Activated CD4-positive, alpha-beta T cell treated with anti-CD3 and anti-CD28 coated beads for 36 hours (primary cell): ENCODE measurements at regions of chr4 and their contacts with region 1.

Region 1: GRCh38 chr4:86934771-86935565 is at the start of gene AFF1:
- DNase-seq: peak; percentile 94
- ATAC-seq: peak; percentile 68
- H3K4me3 Mint-ChIP-seq: peak within 1 kb of the TSS; percentile 84
- H3K27ac Mint-ChIP-seq: peak within 1 kb of the TSS; percentile 97
- H3K4me1 Mint-ChIP-seq: peaks cover 40% of the 10 kb centered on the region
- H3K27me3 Mint-ChIP-seq: no peaks in the 10 kb centered on the region
- total RNA-seq, gene AFF1: 47.3 to 57.8 TPM

Region 2: DNA sequence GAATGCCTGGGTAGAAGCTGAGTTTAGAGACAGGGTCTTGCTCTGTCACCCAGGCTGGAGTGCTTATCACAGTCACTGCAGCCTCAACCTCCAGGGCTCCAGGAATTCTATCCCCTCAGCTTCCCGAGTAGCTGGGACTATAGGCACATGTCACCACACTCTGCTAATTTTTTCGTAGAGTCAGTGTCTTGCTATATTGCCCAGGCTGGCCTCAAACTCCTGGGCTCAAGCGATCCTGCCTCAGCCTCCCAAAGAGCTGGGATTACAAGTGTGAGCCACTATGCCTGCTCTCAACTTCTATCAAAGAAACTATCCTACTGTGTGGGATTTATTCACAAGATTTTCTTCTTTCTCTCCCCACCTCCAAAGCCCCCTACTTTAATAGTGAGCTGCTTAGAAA is 590.8 kb before region 1 on chr4:
- CTCF ChIA-PET with region 1: no interaction called
- POLR2A ChIA-PET with region 1: no interaction called
- intact Hi-C with region 1: no loop called
- DNase-seq: no peak
- ATAC-seq: no peak
- H3K4me3 Mint-ChIP-seq: no peak overlapping the region
- H3K27ac Mint-ChIP-seq: no peak overlapping the region
- H3K4me1 Mint-ChIP-seq: no peaks in the 10 kb centered on the region
- H3K27me3 Mint-ChIP-seq: peaks cover 2% of the 10 kb centered on the region

Region 3: DNA sequence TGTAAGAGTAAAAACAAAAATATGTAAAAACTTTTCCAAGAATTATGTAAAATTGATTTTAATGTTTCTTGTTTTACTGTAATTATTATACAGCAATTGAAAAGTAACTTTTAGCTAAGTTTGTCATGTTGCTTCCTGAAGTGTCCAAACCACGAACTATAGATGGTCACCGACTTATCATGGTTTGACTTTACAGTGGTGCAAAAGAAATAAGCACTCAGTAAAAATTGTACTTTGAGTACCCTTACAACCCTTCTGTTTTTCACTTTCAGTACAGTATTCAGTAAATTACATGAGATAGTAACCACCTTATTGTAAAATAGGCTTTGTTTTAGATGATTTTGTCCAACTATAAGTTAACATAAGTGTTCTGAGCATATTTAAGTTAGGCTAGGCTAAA is 179.6 kb before region 1 on chr4:
- CTCF ChIA-PET with region 1: no interaction called
- POLR2A ChIA-PET with region 1: no interaction called
- intact Hi-C with region 1: no loop called
- DNase-seq: no peak
- ATAC-seq: no peak
- H3K4me3 Mint-ChIP-seq: no peak overlapping the region
- H3K27ac Mint-ChIP-seq: no peak overlapping the region
- H3K4me1 Mint-ChIP-seq: no peaks in the 10 kb centered on the region
- H3K27me3 Mint-ChIP-seq: peaks cover 1% of the 10 kb centered on the region

Region 4: DNA sequence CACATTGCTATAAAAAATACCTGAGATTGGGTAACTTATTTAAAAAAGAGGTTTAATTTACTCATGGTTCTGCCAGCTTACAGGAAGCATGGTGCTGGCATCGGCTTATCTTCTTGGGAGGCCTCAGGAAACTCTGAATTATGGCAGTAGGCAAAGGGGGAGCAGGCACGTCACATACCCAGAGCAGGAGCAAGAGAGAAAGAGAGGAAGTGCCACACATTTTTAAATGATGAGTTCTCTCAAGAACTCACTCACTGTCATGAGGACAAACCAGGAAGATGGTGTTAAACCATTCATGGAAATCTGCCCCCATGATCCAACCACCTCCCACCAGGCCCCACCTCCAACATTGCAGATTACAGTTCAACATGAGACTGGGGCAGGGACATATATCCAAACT is 10.2 kb before region 1 on chr4:
- CTCF ChIA-PET with region 1: interaction called, 18 read pairs
- POLR2A ChIA-PET with region 1: interaction called, 4 read pairs
- intact Hi-C with region 1: loop called in 1 of 2 experiments (anchors 1 kb)
- DNase-seq: no peak
- ATAC-seq: no peak
- H3K4me3 Mint-ChIP-seq: no peak overlapping the region
- H3K27ac Mint-ChIP-seq: no peak overlapping the region
- H3K4me1 Mint-ChIP-seq: peaks cover 24% of the 10 kb centered on the region
- H3K27me3 Mint-ChIP-seq: no peaks in the 10 kb centered on the region

Region 5: DNA sequence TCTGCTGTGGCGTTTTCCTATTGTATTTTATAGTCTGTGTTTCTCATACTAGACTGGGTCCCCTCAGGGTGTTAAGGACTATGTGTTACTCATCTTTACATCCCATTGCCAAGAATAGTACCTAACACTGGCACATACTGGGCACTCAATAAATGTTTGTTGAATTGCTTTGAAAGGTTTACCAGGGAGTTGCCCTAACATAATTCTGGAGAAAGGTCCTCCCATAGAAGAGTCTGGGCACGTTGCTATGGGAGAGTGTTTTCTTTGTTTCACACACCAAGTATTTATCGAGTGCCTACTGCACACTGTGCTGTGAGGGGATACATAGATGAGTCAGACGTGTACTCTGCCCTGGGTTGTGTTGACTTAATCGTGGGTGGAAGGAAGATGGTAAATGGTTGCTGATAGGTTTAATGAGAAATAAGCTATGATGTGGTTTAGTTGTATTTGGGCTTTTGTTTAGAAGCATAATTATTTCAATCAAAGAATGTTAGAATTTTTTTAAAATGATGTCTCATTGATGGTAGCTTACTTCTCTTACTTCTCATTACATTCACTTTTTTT is 42.7 kb after region 1 on chr4:
- CTCF ChIA-PET with region 1: no interaction called
- POLR2A ChIA-PET with region 1: interaction called, 4 read pairs
- intact Hi-C with region 1: loop called (anchors 2 kb)
- DNase-seq: peak; percentile 43
- ATAC-seq: peak; percentile 84
- H3K4me3 Mint-ChIP-seq: no peak overlapping the region
- H3K27ac Mint-ChIP-seq: peak overlapping the region; percentile 59
- H3K4me1 Mint-ChIP-seq: peaks cover 67% of the 10 kb centered on the region
- H3K27me3 Mint-ChIP-seq: no peaks in the 10 kb centered on the region

Region 6: DNA sequence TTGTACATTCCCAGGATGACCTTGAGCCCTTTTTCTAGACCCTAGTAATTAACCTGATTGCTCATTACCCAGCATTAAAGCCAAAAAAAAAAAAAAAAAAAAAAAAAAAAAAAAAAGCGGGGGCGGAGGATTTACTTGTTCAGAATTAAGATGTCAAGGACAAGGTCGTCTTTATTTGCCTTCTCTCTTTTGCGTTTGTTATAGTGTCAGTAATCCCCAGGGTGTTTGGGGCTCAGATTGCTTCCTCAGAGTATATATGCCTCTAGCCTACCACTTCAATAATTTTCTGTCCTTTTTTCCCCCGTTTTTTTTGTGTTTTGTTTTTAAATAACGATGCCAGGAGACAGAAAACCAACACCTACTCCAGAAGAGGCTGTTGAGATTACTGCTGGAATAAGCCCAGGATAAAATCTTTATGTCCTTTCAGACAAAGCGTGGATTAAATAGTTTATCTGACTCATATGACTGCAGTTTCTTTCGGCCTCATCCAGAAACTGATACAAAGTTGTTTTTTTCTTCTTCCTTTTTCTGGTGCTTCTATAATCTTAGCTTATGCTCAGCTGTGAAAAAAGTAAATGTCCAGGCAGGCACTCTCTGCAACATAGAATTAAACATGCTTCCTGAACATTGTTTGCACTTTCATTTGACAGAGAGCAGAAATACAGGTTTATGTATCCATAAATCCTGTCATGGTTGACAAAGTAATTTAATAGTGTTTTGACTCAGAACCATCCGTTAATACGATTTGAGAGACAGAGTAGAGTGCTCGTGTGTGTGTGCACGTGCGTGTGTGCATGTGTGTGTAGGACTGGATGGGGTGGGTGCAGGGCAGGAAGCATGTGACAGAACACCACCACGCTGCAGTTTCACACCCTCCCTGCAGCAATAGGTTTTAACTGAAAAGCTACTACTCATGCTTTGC is 138.5 kb after region 1 on chr4:
- CTCF ChIA-PET with region 1: interaction called, 4 read pairs
- POLR2A ChIA-PET with region 1: no interaction called
- intact Hi-C with region 1: loop called in 1 of 2 experiments (anchors 1 kb)
- DNase-seq: peak; percentile 87
- ATAC-seq: peak; percentile 96
- H3K4me3 Mint-ChIP-seq: peak overlapping the region; percentile 63
- H3K27ac Mint-ChIP-seq: peak overlapping the region; percentile 91
- H3K4me1 Mint-ChIP-seq: peaks cover 51% of the 10 kb centered on the region
- H3K27me3 Mint-ChIP-seq: no peaks in the 10 kb centered on the region

Region 7: GRCh38 chr4:87103691-87104187 is 168.8 kb after region 1 on chr4:
- CTCF ChIA-PET with region 1: interaction called, 6 read pairs
- POLR2A ChIA-PET with region 1: no interaction called
- intact Hi-C with region 1: loop called in 1 of 2 experiments (anchors 1 kb)
- DNase-seq: no peak
- ATAC-seq: peak; percentile 66
- H3K4me3 Mint-ChIP-seq: peak overlapping the region; percentile 7
- H3K27ac Mint-ChIP-seq: peak overlapping the region; percentile 77
- H3K4me1 Mint-ChIP-seq: peaks cover 63% of the 10 kb centered on the region
- H3K27me3 Mint-ChIP-seq: no peaks in the 10 kb centered on the region

Region 8: DNA sequence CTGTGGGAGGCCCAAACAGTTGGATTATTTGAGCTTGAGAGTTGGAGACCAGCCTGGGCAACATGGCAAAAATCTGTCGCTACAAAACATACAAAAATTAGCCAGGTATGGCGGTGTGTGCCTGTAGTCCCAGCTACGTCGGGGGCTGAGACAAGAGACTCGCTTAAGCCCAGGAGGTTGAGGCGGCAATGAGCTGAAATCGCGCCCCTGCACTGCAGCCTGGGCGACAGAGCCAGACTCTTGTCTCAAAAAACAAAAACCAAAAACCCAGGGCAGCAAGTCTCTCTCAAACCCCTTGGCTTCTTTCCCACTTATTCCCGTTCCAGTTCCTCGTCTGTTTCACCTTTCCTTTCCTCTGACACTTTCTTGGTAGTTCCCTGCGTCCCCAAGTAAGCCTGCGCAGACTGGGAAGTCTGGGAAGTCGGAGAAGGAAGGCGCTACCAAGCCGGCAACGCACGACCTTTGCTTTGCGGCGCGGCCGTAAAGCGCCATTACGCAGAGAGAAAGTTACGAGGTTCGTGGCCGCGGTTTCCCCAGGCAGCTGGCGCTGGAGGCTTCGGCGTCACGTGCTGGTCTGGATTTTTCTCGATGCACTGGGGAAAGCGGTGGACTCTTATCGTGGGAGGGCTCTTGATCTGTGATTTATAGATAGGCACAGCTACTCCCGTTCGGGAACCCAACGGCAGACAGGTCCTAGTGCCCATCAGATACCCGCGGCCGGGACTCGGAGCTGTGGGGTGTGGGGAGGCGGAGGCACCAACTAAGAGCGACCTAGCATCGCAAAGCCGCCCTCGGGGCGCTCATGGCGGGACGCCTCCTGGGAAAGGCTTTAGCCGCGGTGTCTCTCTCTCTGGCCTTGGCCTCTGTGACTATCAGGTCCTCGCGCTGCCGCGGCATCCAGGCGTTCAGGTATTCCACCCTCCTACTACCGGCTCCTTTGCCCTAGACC is 487.4 kb after region 1 on chr4 and contains the start of gene NUDT9:
- CTCF ChIA-PET with region 1: no interaction called
- POLR2A ChIA-PET with region 1: no interaction called
- intact Hi-C with region 1: loop called in 1 of 2 experiments (anchors 2 kb)
- DNase-seq: peak; percentile 94
- ATAC-seq: peak; percentile 88
- H3K4me3 Mint-ChIP-seq: peak within 1 kb of the TSS; percentile 86
- H3K27ac Mint-ChIP-seq: peak within 1 kb of the TSS; percentile 99
- H3K4me1 Mint-ChIP-seq: peaks cover 33% of the 10 kb centered on the region
- H3K27me3 Mint-ChIP-seq: no peaks in the 10 kb centered on the region
- total RNA-seq, gene NUDT9: 9.8 to 13.3 TPM